ENCODE measurements at regions of chr16 and their contacts with region 1.

Region 1: GRCh38 chr16:70454222-70455034 is at the start of gene FCSK:
- DNase-seq: peak; percentile 87
- CTCF ChIP-seq: peak; percentile 23

Region 2: DNA sequence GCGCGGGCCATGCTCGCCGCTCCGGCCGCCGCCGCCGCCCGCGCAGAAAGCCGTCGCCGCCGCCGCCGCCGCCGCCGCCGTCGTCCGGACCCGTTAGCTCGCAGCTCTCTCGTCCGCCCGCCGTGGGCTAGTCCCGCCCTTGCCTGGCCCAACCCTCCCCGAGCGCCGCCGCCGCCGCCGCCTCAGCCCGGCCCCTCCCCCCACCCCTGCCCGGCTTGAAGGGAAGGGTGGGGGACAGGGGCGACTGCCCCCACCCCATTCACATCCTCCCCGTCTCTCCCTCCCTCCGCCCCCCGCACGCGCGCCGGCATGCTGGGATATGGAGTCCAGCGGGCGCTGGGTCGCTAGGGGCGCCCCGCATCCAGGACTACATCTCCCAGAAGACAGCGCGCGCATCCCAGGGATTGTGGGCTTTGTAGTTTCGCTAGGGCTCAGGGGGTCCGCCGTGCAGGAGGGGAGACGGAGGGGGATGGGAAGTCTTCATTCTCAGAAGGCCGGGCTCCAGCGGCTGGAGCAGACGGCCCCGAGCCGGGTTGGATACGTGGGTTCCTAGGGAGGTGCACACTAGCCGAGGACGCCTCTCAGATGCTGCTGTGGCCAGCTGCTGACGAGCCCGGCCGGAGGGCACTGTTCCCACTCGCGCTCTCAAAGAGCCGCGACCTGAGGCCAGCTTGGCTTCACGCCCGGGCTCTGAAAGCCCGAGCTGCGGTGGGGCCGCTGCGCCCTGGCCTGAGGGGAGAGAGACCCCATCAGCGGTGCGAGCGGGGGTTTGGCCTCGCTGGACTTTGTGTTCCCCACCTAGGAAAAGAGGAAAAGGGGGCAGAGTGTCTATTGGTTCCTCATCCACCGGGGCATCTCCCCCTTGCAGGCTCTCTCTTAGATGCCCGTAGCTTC is 15.2 kb before region 1 on chr16 and contains the start of gene ST3GAL2:
- CTCF ChIA-PET with region 1: interaction called, 23 read pairs
- POLR2A ChIA-PET with region 1: interaction called, 3 read pairs
- DNase-seq: peak; percentile 96
- CTCF ChIP-seq: no peak

Region 3: GRCh38 chr16:70490261-70490803 is 35.9 kb after region 1 on chr16:
- CTCF ChIA-PET with region 1: no interaction called
- POLR2A ChIA-PET with region 1: no interaction called
- DNase-seq: no peak
- CTCF ChIP-seq: no peak

Region 4: GRCh38 chr16:70529051-70529777 is 74.8 kb after region 1 on chr16:
- CTCF ChIA-PET with region 1: no interaction called
- POLR2A ChIA-PET with region 1: interaction called, 15 read pairs
- DNase-seq: no peak
- CTCF ChIP-seq: peak; percentile 40

Region 5: DNA sequence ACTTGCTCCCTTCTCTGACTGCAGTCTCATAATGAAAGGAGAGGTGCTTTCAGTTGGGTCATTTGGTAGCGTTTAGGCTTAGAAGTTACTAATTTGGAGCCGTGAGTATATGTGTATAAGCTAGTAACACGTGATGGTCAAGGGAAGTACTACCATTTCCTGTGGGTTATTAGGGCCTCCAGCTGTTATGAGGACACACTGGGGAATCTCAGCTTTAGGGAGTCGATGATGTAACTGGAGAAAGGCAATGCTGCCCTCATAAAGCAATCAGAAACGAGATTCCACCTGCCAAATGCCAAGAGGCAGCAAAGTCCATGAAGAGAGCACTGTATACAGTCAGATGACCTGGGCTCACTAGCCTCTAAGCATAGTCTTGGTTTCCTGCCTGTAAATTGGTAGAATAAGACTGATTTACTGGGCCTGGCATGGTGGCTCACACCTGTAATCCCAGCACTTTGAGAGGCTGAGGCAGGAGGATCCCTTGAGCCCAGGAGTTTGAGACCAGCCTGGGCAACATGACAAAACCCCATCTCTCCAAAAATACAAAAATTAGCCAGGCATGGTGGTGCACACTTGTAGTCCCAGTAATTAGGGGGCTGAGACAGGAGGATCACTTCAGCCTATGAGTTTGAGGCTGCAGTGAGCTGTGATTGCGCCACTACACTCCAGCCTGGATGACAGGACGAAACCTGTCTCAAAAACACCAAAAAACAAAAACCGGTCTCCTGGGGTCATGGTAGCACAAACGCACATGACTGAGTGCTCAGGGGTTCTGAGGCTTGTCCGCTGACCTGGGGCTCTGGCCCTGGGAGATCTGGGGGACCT is 122.2 kb after region 1 on chr16:
- CTCF ChIA-PET with region 1: no interaction called
- POLR2A ChIA-PET with region 1: no interaction called
- DNase-seq: peak; percentile 65
- CTCF ChIP-seq: no peak

Measured in GM10248 (cell line).